Activated CD4-positive, alpha-beta T cell treated with anti-CD3 and anti-CD28 coated beads for 36 hours (primary cell): ENCODE measurements at regions of chr4 and their contacts with region 1.

Region 1: DNA sequence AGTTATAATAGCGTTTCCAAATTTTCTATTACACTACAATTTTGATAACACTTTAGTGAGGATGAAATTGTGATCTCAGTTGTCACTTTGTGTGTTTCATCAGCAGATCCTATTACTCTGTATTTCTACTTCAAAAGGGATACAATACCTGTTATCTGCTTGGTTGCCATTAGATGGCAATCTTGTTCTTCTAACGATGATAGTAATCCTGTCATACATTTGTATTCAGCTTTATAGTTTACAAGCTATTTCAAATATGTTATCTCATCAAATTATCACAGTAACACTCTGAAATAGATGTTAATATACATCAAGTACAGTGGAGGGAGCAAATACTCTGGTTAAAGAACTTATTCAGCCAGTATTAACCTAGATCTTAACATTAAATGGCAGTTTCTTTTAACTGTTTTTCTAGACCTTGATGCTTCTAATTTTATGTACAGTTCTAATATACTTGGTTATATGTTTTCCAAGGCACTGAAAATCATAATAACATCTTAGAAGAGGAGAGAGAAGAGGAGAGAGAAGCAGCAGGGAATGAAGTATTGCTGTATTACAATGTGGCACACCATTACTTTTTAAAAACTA is 292.0 kb downstream of the CCSER1 start:
- DNase-seq: no peak
- ATAC-seq: no peak
- H3K4me3 Mint-ChIP-seq: no peak overlapping the region
- H3K27ac Mint-ChIP-seq: no peak overlapping the region
- H3K4me1 Mint-ChIP-seq: no peaks in the 10 kb centered on the region
- H3K27me3 Mint-ChIP-seq: no peaks in the 10 kb centered on the region

Region 2: DNA sequence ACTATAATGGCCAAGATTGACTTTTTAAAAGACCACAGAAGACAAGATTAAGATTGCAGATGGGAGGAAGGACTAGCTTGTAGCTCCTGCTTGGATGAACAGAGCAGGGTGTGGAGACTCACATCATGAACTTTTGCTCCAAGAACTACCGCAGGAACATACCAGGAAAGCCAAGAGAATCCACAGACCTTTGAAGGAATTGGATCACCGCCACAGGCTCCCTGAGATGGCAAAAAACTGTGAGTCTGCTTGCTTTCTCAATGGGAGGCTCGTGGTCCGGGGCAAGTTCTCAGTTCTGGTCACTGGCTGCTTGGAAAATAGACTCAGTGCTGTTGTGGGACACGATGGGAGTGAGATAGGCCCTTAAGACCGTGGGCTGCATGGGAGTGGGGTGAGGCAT is 15.4 kb before region 1 on chr4:
- CTCF ChIA-PET with region 1: interaction called, 10 read pairs
- POLR2A ChIA-PET with region 1: no interaction called
- intact Hi-C with region 1: no loop called
- DNase-seq: no peak
- ATAC-seq: no peak
- H3K4me3 Mint-ChIP-seq: no peak overlapping the region
- H3K27ac Mint-ChIP-seq: no peak overlapping the region
- H3K4me1 Mint-ChIP-seq: no peaks in the 10 kb centered on the region
- H3K27me3 Mint-ChIP-seq: no peaks in the 10 kb centered on the region